ENCODE measurements at regions of chr14 and their contacts with region 1.

Region 1: DNA sequence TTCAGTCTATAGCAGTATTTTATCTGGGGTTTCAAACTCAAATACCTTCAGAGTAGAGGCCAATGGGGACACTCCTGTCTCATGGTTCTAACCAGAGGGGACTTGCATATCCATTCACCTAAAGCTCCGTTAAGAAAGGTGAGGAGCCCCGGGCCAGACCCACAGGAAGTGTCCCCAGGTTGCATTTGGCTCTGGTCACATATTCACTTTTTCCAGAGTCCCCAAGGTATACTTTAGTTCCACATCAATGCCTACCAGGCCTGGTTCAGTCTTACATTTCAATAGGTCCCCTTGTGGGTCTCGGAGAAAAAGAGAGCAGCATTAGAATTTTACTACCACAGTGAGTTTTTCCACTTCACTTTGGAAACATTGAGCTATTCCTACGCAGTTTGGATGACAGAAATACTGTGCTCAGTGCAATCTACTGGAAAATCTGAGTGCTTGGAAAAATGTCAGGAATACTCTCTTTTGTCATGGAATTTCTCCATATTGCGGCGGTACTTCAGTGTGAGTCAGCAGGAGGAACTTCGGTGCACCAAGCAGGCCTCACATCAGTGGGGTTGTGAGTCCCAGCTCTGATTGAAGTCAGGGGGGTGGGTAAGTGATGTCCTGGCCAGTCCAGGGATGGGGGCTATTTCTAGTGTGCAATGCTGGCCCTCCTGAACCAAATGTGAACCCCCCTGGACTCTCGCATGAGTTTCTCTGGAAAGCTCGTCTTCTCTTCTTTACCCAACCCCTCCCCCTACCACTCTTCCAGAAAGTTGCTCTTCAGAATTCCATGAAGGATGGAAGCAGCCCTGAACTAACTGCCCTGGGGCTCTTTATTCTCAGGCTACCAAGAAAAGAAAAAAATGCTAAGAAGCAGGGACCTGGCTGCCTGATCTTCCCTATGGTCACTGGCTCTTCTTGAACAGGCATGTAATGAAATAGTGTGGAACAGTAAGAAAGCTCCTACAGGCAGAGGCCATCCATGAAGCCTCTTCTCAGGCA is 184.7 kb downstream of the PRKCH start:
- DNase-seq: no peak
- ATAC-seq: no peak
- H3K4me3 ChIP-seq: no peak overlapping the region
- H3K27ac ChIP-seq: peak overlapping the region in 1 of 2 experiments; percentile 58; a peak in 3 of 6 replicates
- H3K4me1 ChIP-seq: peaks cover 21% of the 10 kb centered on the region
- CTCF ChIP-seq: no peak
- EP300 ChIP-seq: no peak
- POLR2A ChIP-seq: no peak
- RAD21 ChIP-seq: no peak

Region 2: DNA sequence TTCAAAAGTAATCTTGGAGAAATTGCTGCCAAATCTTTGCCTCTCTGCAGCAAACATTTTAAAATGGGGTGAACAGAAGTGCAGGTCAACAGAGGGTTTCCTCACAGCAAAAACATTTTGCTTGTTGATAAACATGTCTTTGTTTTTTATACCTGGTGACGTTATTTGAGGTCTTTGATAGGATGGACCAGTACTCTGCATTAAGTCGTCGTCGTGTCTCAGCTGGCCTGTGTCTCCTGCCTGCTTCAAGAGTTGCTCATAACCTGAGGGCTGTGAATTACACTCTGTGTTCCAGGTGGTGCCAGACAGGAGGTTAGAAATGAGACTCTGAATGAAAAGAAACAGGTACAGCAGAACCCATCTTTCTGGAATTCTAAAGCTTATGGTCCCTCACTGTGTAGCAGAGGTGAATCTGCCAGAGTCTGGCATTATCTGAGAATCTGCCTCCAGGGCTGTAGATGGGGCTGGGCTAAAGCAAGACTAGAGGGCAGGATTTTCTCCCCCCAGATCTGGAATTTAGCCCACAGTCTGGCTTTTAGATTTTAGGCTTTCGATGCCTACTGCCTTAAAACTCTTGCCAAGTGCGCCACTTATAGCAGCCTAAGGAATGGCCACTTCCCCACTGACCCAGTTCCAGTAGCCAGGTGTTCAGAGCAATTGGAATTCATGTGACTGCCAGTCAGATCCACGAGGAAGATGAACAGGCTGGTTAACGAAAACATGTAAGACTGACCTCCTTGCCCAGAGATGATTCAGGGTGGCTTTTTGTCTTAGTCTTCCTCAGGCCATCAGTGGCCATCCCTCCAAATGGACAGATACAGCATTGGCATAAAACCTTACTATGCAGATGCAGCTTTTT is 23.5 kb before region 1 on chr14:
- CTCF ChIA-PET with region 1: no interaction called
- POLR2A ChIA-PET with region 1: no interaction called
- DNase-seq: no peak
- ATAC-seq: no peak
- H3K4me3 ChIP-seq: no peak overlapping the region
- H3K27ac ChIP-seq: peak overlapping the region; percentile 34 to 91; a peak in 5 of 6 replicates
- H3K4me1 ChIP-seq: peaks cover 62% of the 10 kb centered on the region
- CTCF ChIP-seq: no peak
- EP300 ChIP-seq: no peak
- POLR2A ChIP-seq: no peak
- RAD21 ChIP-seq: no peak

Region 3: GRCh38 chr14:61493239-61493638 is 12.9 kb before region 1 on chr14:
- CTCF ChIA-PET with region 1: interaction called, 12 read pairs
- POLR2A ChIA-PET with region 1: no interaction called
- DNase-seq: peak in 1 of 2 experiments; percentile 48
- ATAC-seq: peak in 1 of 2 experiments; percentile 70; a peak in 3 of 6 replicates
- H3K4me3 ChIP-seq: no peak overlapping the region
- H3K27ac ChIP-seq: peak overlapping the region; percentile 78 to 87
- H3K4me1 ChIP-seq: peaks cover 57% of the 10 kb centered on the region
- CTCF ChIP-seq: no peak
- EP300 ChIP-seq: no peak
- POLR2A ChIP-seq: no peak
- RAD21 ChIP-seq: no peak